Heart left ventricle (tissue), 16 donors: ENCODE measurements at regions of chr15 and their contacts with region 1.

Region 1: GRCh38 chr15:98779463-98780071 is 131.2 kb downstream of the IGF1R start:
- DNase-seq: peak; percentile 73 to 89 (median 83)
- ATAC-seq: peak; percentile 68 to 91 (median 88)
- H3K4me3 ChIP-seq: no peak overlapping the region
- H3K27ac ChIP-seq: peak overlapping the region in 7 of 12 donors; percentile 13 to 67 (median 30)
- H3K4me1 ChIP-seq: peaks cover 0 to 53% (median 30%) of the 10 kb centered on the region in 12 donors
- H3K27me3 ChIP-seq: no peaks in the 10 kb centered on the region
- CTCF ChIP-seq: peak; percentile 81 to 95 (median 92)
- POLR2A ChIP-seq: no peak

Region 2: DNA sequence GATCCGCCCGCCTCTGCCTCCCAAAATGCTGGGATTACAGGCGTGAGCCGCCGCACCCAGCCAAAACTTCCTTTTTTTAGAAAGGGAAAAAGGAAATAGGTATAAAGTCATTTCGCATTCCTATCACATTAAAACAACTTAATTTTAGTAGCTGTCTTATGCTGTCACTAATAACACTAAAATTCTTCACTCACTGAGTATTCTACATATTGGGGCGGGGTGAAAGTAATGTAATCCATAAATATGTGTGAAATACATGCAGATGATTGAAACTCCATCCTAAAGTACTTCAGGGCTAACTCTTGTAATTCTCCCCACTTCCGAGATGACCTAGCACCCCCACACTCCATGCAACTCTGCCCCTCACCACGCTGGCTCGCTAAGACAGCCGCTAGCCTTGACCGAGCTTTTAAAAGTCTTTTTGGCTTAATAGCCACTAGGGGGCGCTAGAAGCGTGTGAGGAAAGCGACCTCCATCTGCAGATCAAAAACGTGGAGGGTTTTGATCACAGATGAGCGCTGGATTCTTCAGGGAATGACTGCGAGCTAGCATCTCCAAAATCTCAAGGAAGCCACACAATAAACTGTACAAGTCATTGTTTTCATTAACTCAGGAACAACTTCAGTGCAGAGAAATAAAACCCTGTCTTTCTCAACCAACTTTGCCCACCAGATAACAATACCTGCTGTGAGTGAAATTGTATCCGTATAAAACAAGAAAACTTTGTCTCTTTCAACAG is 260.6 kb before region 1 on chr15:
- intact Hi-C with region 1: loop called in 3 of 10 experiments (anchors 10 kb)
- DNase-seq: peak in 3 of 5 donors; percentile 41 to 54 (median 50)
- ATAC-seq: peak in 3 of 4 donors; percentile 73 to 82 (median 82)
- H3K4me3 ChIP-seq: no peak overlapping the region
- H3K27ac ChIP-seq: no peak overlapping the region
- H3K4me1 ChIP-seq: peaks cover 0 to 8% (median under 1%) of the 10 kb centered on the region in 12 donors
- H3K27me3 ChIP-seq: peaks cover 0 to 8% (median 0%) of the 10 kb centered on the region in 9 donors
- CTCF ChIP-seq: peak; percentile 62 to 89 (median 82)
- POLR2A ChIP-seq: no peak

Region 3: GRCh38 chr15:98658831-98659699 is 120.5 kb before region 1 on chr15:
- intact Hi-C with region 1: loop called in 9 of 10 experiments (anchors 5 kb)
- DNase-seq: peak in 1 of 5 donors; percentile 40
- ATAC-seq: peak; percentile 43 to 80 (median 72)
- H3K4me3 ChIP-seq: no peak overlapping the region
- H3K27ac ChIP-seq: peak overlapping the region in 1 of 12 donors; percentile 23
- H3K4me1 ChIP-seq: peaks cover 0 to 84% (median 46%) of the 10 kb centered on the region in 12 donors
- H3K27me3 ChIP-seq: no peaks in the 10 kb centered on the region
- CTCF ChIP-seq: peak; percentile 75 to 90 (median 82)
- POLR2A ChIP-seq: no peak

Region 4: GRCh38 chr15:98727115-98728085 is 52.2 kb before region 1 on chr15:
- intact Hi-C with region 1: loop called in 1 of 10 experiments (anchors 5 kb)
- DNase-seq: peak; percentile 87 to 95 (median 93)
- ATAC-seq: peak; percentile 87 to 95 (median 94)
- H3K4me3 ChIP-seq: peak overlapping the region in 3 of 12 donors; percentile 3 to 15 (median 14)
- H3K27ac ChIP-seq: peak overlapping the region; percentile 52 to 95 (median 90)
- H3K4me1 ChIP-seq: peaks cover 3 to 95% (median 73%) of the 10 kb centered on the region in 12 donors
- H3K27me3 ChIP-seq: no peaks in the 10 kb centered on the region
- CTCF ChIP-seq: no peak
- POLR2A ChIP-seq: no peak

Region 5: DNA sequence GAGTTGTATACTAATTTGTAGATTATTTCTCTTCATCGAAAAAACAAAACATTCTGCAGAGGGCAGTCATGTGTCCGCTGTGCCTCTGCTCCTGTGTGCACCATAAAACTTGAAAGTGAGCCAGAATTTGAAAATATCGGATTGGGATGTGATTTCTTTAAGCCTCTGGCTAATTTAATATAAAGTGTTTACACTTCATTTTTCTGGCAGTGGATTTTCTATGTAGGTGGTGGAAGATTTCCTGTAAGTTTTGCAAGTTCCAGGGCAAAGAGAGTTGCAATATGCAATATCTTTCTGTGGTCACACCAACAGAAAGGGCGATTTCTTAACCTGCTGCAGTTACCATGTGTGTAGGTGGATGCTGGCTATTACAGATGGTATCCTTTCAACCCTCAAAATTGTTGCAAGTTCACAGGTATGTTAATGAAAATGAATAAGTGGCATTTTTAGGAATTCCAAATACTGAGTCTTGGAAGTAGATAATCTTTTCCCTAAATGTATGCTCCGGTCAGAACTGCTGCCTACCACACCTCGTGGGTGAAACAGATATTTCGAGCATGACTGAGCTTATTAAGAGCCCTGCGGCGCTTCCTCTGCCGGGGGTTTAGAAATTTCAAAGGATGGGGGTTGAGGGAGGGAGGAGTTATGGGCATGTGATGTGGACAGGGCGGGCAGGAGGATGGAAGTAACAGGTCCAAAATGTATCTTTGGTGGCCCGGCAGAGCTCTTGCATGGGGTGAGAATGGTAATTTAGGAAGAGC is 94.1 kb after region 1 on chr15:
- intact Hi-C with region 1: loop called in 2 of 10 experiments (anchors 5 kb)
- DNase-seq: no peak
- ATAC-seq: peak in 1 of 4 donors; percentile 27
- H3K4me3 ChIP-seq: no peak overlapping the region
- H3K27ac ChIP-seq: peak overlapping the region in 9 of 12 donors; percentile 18 to 81 (median 55)
- H3K4me1 ChIP-seq: peaks cover 0 to 89% (median 58%) of the 10 kb centered on the region in 12 donors
- H3K27me3 ChIP-seq: no peaks in the 10 kb centered on the region
- CTCF ChIP-seq: no peak
- POLR2A ChIP-seq: no peak

Region 6: GRCh38 chr15:99059010-99059981 is 279.7 kb after region 1 on chr15:
- intact Hi-C with region 1: loop called in 6 of 10 experiments (anchors 5 to 10 kb)
- DNase-seq: peak; percentile 84 to 91 (median 86)
- ATAC-seq: peak; percentile 85 to 94 (median 88)
- H3K4me3 ChIP-seq: peak overlapping the region; percentile 44 to 73 (median 62)
- H3K27ac ChIP-seq: peak overlapping the region; percentile 39 to 94 (median 79)
- H3K4me1 ChIP-seq: peaks cover 0 to 39% (median 18%) of the 10 kb centered on the region in 12 donors
- H3K27me3 ChIP-seq: peaks cover 0 to 13% (median 0%) of the 10 kb centered on the region in 9 donors
- CTCF ChIP-seq: peak; percentile 50 to 89 (median 78)
- POLR2A ChIP-seq: peak in 1 of 2 donors; percentile 35